AG04450 (cell line): ENCODE measurements at regions of chr13 and their contacts with region 1.

Region 1: DNA sequence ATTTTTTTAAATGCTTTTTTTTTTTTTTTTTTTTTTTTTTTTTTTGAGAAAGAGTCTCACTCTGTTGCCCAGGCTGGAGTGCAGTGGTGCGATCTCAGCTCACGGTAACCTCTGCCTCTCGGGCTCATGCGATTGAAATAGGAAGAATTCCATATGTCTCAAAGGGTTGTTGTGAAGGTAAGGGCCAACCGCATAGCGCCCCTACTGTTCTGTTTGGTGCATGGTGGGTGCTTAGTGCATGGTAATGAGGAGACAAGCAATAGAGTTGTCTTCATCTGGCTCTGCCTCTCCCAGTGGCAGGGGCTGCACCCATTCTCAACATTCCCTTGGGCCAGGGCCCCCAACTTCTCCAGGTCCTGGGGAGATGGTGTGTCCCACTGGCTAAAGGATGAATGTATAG is 68.7 kb downstream of the RASL11A start:
- DNase-seq: no peak
- H3K4me3 ChIP-seq: no peak overlapping the region
- H3K27ac ChIP-seq: no peak overlapping the region
- H3K27me3 ChIP-seq: peaks cover 2% of the 10 kb centered on the region
- CTCF ChIP-seq: peak; percentile 67

Region 2: DNA sequence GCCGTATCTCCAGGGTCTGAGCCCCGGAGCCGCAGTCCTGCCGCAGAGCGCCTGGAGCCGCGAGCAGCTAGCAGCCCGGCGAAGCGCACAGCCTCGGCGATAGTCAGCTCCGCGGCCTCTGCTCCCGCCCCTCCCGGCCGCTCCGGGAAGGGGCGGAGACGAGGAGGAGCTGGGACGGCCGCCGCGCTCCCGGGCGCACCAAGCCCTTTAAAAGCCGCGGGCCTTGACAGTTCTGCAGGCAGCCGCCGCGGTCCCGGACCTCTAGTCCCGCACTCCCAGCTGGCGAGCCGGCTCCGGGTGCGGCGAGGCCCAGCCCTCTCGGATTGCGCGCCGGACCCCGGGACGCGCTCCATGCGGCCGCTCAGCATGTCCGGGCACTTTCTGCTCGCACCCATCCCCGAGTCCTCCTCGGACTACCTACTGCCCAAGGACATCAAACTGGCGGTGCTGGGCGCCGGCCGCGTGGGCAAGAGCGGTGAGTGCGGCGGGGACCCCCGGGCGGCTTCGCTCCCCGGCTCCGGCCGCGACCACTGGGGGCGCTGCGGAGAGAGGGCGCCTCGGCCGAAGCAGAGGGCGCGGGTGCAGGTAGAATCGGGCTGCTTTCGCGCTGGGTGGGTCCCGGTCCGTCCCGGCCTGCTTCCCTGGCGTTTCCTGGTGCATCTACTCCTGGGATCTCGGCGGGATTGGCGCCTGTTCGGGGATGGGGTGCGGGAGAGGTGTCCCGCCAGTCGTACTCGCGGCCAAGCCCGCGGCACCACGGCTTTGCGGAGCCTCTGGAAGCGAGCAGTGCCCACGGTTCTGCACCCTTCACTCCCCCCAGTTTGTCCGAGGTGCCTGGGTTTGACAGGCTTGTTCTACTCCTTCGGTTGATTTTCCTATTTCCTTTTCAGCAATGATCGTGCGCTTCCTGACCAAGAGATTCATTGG is 68.4 kb before region 1 on chr13 and contains the start of gene RASL11A:
- CTCF ChIA-PET with region 1: interaction called, 11 read pairs
- POLR2A ChIA-PET with region 1: interaction called, 5 read pairs
- DNase-seq: peak; percentile 82
- H3K4me3 ChIP-seq: peak within 1 kb of the TSS; percentile 84
- H3K27ac ChIP-seq: peak within 1 kb of the TSS; percentile 73
- H3K27me3 ChIP-seq: peaks cover 3% of the 10 kb centered on the region
- CTCF ChIP-seq: peak; percentile 73
- polyA plus RNA-seq, gene RASL11A: 13.5 and 14.4 TPM in 2 replicates

Region 3: GRCh38 chr13:27309967-27310598 is 29.2 kb before region 1 on chr13:
- CTCF ChIA-PET with region 1: interaction called, 12 read pairs
- POLR2A ChIA-PET with region 1: interaction called, 5 read pairs
- DNase-seq: no peak
- H3K4me3 ChIP-seq: no peak overlapping the region
- H3K27ac ChIP-seq: no peak overlapping the region
- H3K27me3 ChIP-seq: peaks cover 9% of the 10 kb centered on the region
- CTCF ChIP-seq: no peak

Region 4: GRCh38 chr13:27353166-27353583 is 13.9 kb after region 1 on chr13:
- CTCF ChIA-PET with region 1: interaction called, 38 read pairs
- POLR2A ChIA-PET with region 1: interaction called, 4 read pairs
- DNase-seq: peak; percentile 29
- H3K4me3 ChIP-seq: peak overlapping the region; percentile 48
- H3K27ac ChIP-seq: peak overlapping the region; percentile 82
- H3K27me3 ChIP-seq: no peaks in the 10 kb centered on the region
- CTCF ChIP-seq: no peak

Region 5: DNA sequence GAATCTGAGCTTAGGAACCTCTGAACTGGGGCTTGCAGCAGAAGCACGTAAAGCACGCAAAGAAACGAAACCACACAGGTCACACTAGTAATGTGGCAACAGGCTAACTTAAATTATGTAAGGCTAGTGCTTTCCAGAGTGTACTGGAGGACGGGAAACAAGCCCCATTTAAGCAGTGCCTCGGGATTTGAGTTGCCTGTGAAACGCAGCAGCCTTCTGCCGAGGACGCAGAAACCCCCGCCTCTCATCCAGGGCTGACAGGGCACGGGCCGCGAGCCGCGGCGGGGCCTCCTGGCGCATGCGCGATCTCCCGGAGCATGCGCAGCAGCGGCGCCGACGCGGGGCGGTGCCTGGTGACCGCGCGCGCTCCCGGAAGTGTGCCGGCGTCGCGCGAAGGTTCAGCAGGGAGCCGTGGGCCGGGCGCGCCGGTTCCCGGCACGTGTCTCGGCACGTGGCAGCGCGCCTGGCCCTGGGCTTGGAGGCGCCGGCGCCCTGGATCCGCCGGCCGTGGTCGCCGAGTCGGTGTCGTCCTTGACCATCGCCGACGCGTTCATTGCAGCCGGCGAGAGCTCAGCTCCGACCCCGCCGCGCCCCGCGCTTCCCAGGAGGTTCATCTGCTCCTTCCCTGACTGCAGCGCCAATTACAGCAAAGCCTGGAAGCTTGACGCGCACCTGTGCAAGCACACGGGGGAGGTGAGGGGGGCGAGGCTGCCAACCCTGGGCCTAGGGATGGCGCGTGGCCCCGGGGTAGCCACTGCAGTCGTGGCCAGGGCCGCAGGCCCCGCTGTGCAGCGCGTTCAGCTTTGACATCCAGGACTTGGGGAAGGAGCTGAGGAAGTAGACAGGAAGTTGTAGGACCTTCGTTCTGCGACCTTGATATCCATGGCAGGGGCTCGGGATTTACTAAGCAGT is 85.2 kb after region 1 on chr13 and contains the start of gene GTF3A:
- CTCF ChIA-PET with region 1: no interaction called
- POLR2A ChIA-PET with region 1: no interaction called
- DNase-seq: peak; percentile 52
- H3K4me3 ChIP-seq: peak within 1 kb of the TSS; percentile 85
- H3K27ac ChIP-seq: peak within 1 kb of the TSS; percentile 21
- H3K27me3 ChIP-seq: no peaks in the 10 kb centered on the region
- CTCF ChIP-seq: no peak
- polyA plus RNA-seq, gene GTF3A: 89.0 and 104 TPM in 2 replicates